MCF 10A (cell line): ENCODE measurements at regions of chr3 and their contacts with region 1.

Region 1: DNA sequence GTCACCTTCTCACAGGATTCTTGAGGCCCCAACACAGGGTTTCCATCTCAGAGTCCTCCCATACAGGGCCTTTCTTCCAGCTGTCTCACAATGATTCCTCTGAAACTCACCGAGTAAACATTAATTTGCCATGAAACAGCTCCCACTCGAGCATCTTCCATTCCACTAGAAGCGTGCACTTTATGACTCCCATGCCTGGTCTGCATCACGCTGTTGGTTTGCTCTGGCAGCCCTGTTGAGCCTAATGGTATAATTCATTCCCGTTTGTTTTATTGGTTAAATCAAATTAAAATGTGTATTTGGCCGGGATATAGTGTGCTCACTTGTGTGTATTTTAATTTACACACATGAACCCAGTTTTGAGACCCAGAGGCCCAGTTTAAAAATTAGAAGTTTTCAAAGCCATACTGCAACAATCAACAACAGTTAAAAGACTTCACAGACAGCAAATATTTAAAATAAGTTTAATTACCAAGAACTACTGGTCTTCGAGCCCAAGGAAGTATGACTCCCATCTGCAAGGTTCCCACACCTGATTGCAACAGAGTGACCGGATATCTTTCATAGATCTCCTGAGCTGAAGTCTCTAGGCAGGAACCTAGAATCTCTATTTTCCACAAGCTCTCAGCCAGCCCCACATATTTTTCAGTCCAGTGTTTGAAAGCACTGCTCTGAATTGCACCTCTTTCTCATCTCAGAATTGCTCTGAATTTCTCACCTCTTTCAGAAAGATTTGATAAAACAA is 42.3 kb upstream of the GYG1 start:
- DNase-seq: no peak
- H3K4me3 Mint-ChIP-seq: no peak overlapping the region
- H3K27ac Mint-ChIP-seq: no peak overlapping the region
- H3K4me1 Mint-ChIP-seq: no peaks in the 10 kb centered on the region
- H3K27me3 Mint-ChIP-seq: peaks cover 12% of the 10 kb centered on the region
- CTCF ChIP-seq: no peak

Region 2: GRCh38 chr3:148854061-148854460 is 95.0 kb before region 1 on chr3:
- CTCF ChIA-PET with region 1: interaction called, 296 read pairs
- POLR2A ChIA-PET with region 1: no interaction called
- intact Hi-C with region 1: no loop called
- DNase-seq: no peak
- H3K4me3 Mint-ChIP-seq: no peak overlapping the region
- H3K27ac Mint-ChIP-seq: no peak overlapping the region
- H3K4me1 Mint-ChIP-seq: no peaks in the 10 kb centered on the region
- H3K27me3 Mint-ChIP-seq: peaks cover 71% of the 10 kb centered on the region
- CTCF ChIP-seq: no peak

Region 3: GRCh38 chr3:148896062-148896461 is 53.0 kb before region 1 on chr3:
- CTCF ChIA-PET with region 1: no interaction called
- POLR2A ChIA-PET with region 1: no interaction called
- intact Hi-C with region 1: no loop called
- DNase-seq: no peak
- H3K4me3 Mint-ChIP-seq: no peak overlapping the region
- H3K27ac Mint-ChIP-seq: no peak overlapping the region
- H3K4me1 Mint-ChIP-seq: no peaks in the 10 kb centered on the region
- H3K27me3 Mint-ChIP-seq: peaks cover 89% of the 10 kb centered on the region
- CTCF ChIP-seq: no peak

Region 4: DNA sequence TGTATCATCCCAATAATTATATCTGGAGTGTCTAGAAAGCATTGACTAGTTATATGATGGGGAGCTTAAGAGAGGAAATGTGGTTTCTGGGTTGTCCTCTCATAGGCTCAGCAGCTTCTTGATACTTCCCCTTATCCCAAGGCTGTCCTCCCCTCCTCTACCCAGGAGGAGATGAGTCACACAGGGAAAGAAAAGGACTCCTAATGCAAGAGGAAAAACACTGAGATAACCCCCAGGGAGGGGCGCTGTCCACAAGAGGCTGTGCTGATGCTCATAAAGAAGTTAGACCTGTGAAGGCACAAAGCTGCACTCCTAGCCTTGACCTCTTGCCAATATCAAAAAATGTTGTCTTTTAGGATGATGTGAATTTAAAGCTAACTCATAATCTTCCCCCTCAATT is 13.4 kb after region 1 on chr3:
- CTCF ChIA-PET with region 1: interaction called, 64 read pairs
- POLR2A ChIA-PET with region 1: no interaction called
- intact Hi-C with region 1: no loop called
- DNase-seq: peak; percentile 77
- H3K4me3 Mint-ChIP-seq: no peak overlapping the region
- H3K27ac Mint-ChIP-seq: no peak overlapping the region
- H3K4me1 Mint-ChIP-seq: no peaks in the 10 kb centered on the region
- H3K27me3 Mint-ChIP-seq: peaks cover 33% of the 10 kb centered on the region
- CTCF ChIP-seq: no peak